ENCODE measurements at regions of chr10 and their contacts with region 1.

Region 1: DNA sequence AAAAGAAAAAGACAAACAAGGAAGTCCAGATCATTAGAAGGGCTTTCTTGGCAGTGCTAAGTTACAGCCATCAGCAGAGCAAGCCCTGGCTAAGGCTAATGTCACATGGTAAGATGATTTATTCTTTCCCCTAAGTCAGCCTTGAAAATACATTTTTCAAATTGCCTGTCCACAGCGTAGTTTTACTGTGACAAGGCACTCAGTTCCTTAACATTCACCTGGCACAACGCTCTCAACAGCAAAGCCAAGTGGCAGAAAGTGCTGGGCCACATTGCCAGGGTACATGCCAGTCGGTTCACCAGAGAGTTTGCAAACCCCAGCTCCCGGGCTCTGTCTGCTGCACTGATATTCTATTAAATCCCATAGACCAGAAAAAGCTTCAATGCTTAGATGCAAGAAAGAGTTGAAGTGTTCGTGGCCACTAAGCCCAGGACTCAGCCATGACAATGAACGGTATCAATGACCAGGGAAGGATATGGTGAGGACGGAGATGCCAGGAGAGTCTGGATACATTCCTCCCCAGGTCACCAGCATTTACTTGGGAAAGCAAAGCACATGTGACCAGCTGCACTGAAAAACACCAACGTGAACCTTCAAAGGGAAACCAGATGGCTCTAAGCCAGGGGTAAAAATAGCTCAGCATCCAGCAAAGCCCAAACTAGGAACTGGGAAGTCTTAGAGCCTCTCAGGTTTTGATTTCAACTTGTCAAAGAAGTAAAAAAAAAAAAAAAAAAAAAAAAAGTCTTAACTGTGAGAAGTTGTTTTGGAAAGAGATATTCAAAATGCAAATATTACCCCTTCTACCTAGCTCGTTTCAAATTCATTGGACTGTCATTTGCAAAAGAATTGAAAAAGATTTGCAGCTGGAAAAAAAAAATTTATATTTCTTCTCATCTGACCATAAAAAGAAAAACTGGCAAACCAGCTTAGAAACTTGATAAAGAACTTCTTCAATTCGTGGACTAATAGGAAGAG is 23.9 kb upstream of the MPP7 start:
- DNase-seq: no peak
- ATAC-seq: peak in 1 of 4 experiments; percentile 30
- H3K4me3 ChIP-seq: no peak overlapping the region
- H3K4me3 Mint-ChIP-seq: peak overlapping the region in 1 of 3 donors; percentile 66
- H3K27ac ChIP-seq: no peak overlapping the region
- H3K27ac Mint-ChIP-seq: peak overlapping the region in 1 of 2 donors; percentile 71
- H3K4me1 ChIP-seq: peaks cover 28 to 30% of the 10 kb centered on the region in 2 experiments
- H3K4me1 Mint-ChIP-seq: peaks cover 69 to 81% (median 74%) of the 10 kb centered on the region in 3 donors
- H3K27me3 ChIP-seq: no peaks in the 10 kb centered on the region
- H3K27me3 Mint-ChIP-seq: no peaks in the 10 kb centered on the region

Region 2: GRCh38 chr10:27601503-27601902 is 725.3 kb before region 1 on chr10:
- CTCF ChIA-PET with region 1: no interaction called
- POLR2A ChIA-PET with region 1: interaction called in 1 of 2 experiments, 12 read pairs
- DNase-seq: no peak
- ATAC-seq: no peak
- H3K4me3 ChIP-seq: no peak overlapping the region
- H3K4me3 Mint-ChIP-seq: no peak overlapping the region
- H3K27ac ChIP-seq: no peak overlapping the region
- H3K27ac Mint-ChIP-seq: no peak overlapping the region
- H3K4me1 ChIP-seq: no peaks in the 10 kb centered on the region
- H3K4me1 Mint-ChIP-seq: no peaks in the 10 kb centered on the region
- H3K27me3 ChIP-seq: peaks cover 0 to 12% of the 10 kb centered on the region in 2 experiments
- H3K27me3 Mint-ChIP-seq: peaks cover 2 to 3% of the 10 kb centered on the region in 2 donors

Region 3: GRCh38 chr10:28355376-28355775 is 28.6 kb after region 1 on chr10:
- CTCF ChIA-PET with region 1: interaction called in 1 of 2 experiments, 3 read pairs
- POLR2A ChIA-PET with region 1: interaction called in 1 of 2 experiments, 11 read pairs
- DNase-seq: no peak
- ATAC-seq: no peak
- H3K4me3 ChIP-seq: no peak overlapping the region
- H3K4me3 Mint-ChIP-seq: no peak overlapping the region
- H3K27ac ChIP-seq: no peak overlapping the region
- H3K27ac Mint-ChIP-seq: no peak overlapping the region
- H3K4me1 ChIP-seq: no peaks in the 10 kb centered on the region
- H3K4me1 Mint-ChIP-seq: peaks cover 2 to 8% (median 3%) of the 10 kb centered on the region in 3 donors
- H3K27me3 ChIP-seq: no peaks in the 10 kb centered on the region
- H3K27me3 Mint-ChIP-seq: no peaks in the 10 kb centered on the region

Region 4: DNA sequence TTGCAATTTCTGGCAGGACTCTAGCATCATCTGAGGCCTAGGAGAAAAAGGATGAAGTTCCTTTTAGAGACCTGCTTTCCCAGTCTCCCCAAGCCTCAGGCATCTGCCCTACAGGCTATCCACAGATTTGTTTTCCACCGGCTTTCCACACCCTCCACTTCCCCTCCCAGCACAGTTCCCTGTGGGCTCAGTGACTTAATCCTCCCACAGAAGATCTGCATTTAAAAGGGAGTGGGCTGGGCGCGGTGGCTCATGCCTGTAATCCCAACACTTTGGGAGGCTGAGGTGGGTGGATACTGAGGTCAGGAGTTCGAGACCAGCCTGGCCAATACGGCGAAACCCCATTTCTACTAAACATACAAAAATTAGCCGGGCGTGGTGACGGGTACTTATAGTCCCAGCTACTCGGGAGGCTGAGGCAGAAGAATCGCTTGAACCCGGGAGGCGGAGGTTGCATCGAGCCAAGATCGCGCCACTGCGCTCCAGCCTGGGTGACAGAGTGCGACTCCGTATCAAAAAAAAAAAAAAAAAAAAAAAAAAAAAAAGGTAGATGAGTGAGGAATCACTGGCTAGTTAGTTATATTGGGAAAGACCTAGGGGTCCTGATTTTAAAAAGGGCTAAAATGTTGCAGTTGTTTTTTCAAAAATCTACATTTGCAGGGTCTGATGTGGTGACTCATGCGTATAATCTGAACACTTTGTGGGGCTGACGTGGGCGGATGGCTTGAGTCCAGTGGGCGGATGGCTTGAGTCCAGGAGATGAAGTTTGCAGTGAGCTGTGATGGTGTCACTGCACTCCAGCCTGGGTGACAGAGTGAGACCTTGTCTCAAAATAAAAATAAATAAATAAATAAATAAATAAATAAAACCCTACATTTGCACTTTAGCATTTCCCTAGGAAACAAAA is 470.1 kb after region 1 on chr10:
- CTCF ChIA-PET with region 1: no interaction called
- POLR2A ChIA-PET with region 1: no interaction called
- DNase-seq: no peak
- ATAC-seq: no peak
- H3K4me3 ChIP-seq: no peak overlapping the region
- H3K4me3 Mint-ChIP-seq: no peak overlapping the region
- H3K27ac ChIP-seq: no peak overlapping the region
- H3K27ac Mint-ChIP-seq: no peak overlapping the region
- H3K4me1 ChIP-seq: no peaks in the 10 kb centered on the region
- H3K4me1 Mint-ChIP-seq: no peaks in the 10 kb centered on the region
- H3K27me3 ChIP-seq: no peaks in the 10 kb centered on the region
- H3K27me3 Mint-ChIP-seq: peaks cover 2 to 9% of the 10 kb centered on the region in 2 donors

Region 5: GRCh38 chr10:28875549-28876081 is 548.8 kb after region 1 on chr10:
- CTCF ChIA-PET with region 1: no interaction called
- POLR2A ChIA-PET with region 1: no interaction called
- DNase-seq: no peak
- ATAC-seq: no peak
- H3K4me3 ChIP-seq: no peak overlapping the region
- H3K4me3 Mint-ChIP-seq: no peak overlapping the region
- H3K27ac ChIP-seq: no peak overlapping the region
- H3K27ac Mint-ChIP-seq: no peak overlapping the region
- H3K4me1 ChIP-seq: no peaks in the 10 kb centered on the region
- H3K4me1 Mint-ChIP-seq: no peaks in the 10 kb centered on the region
- H3K27me3 ChIP-seq: peaks cover 0 to 9% of the 10 kb centered on the region in 2 experiments
- H3K27me3 Mint-ChIP-seq: no peaks in the 10 kb centered on the region

Measured in T-cell (primary cell).